Activated CD8-positive, alpha-beta memory T cell treated with anti-CD3 and anti-CD28 coated beads, Interleukin-2, amount 10 ng/mL, durations not matched to agents 7 days and 5 days (primary cell): ENCODE measurements at regions of chr16 and their contacts with region 1.

Region 1: DNA sequence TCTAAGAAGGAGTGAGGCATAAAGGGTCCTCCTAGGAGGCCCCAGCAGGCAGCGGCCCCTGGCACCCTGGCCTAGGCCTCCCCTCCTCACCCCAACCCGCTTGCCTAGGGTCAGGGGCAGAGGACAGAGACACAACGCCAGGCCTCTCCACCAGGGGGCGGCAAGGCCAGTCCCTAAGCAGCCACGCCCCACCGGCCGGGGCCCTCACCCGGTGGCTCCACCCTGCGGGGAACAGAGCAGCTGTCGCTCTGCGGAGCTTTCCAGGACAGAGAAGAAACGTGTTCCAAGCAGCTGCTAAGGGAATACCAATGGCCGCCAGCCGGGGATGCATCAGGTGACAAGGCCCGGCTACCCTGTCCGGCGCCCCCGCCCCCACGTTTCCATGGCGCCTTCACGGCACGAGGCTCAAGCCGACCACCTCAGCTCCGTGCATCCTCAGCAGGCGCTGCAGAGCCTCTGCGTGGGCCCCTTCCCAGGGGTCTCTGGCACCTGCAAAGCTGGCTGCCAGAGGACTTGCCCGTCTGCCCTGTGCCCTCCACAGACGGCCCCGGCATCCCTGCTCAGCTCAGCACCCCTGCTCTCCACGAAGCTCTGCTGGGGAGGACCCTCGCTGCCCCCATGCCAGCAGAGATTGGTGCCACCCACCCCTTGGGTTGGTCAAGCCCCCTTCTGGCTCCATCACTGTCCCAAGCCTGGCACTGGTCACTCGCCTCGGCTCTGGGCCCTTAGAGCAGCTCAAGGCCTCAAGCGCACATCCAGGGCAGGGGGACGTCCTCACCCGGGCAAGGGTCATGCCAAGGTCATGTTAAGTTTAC is 5.6 kb downstream of the ZNF598 start:
- DNase-seq: peak; percentile 92
- ATAC-seq: peak; percentile 92
- H3K4me3 Mint-ChIP-seq: no peak overlapping the region
- H3K27ac Mint-ChIP-seq: no peak overlapping the region
- H3K4me1 Mint-ChIP-seq: peaks cover 39% of the 10 kb centered on the region
- H3K27me3 Mint-ChIP-seq: no peaks in the 10 kb centered on the region

Region 2: DNA sequence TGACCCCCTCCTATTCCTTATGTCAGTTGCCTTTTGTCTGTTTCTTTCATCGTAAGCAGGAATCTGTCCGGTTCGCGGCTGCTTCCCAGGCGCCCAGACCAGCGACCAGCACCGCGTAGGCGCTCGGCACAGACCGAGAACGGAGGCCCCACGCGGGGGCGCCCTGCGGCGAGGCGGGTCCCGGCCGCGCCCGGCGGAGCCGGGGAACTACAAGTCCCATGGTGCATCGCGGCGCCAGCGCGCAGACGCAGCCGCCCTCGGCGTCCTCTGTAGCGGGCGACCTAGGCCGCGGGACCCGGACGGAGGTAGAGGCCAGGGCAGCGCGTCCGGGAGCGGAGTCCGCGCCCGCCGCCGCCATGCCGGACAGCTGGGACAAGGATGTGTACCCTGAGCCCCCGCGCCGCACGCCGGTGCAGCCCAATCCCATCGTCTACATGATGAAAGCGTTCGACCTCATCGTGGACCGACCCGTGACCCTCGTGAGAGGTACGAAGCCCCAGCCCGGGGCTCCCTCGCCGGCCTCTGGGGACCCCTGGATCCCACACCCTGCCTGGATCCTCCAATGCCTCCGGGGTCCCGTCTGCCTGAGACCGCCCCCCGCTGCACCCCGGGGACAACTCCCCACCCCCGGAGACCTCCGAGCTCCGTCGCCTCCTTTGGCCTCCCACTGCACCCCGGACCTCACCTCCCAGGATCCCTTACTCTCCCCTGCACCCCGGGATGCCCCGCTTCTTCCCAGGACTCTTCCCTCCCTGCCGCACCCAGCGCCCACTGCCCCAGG is 44.6 kb before region 1 on chr16 and contains the start of gene NDUFB10:
- CTCF ChIA-PET with region 1: interaction called, 10 read pairs
- DNase-seq: peak; percentile 92
- ATAC-seq: peak; percentile 81
- H3K4me3 Mint-ChIP-seq: peak within 1 kb of the TSS; percentile 88
- H3K27ac Mint-ChIP-seq: peak within 1 kb of the TSS; percentile 94
- H3K4me1 Mint-ChIP-seq: peaks cover 45% of the 10 kb centered on the region
- H3K27me3 Mint-ChIP-seq: peaks cover 2% of the 10 kb centered on the region
- total RNA-seq, gene NDUFB10: 148 to 158 TPM

Region 3: GRCh38 chr16:1983544-1984346 is 20.3 kb before region 1 on chr16 and contains the start of gene GFER:
- CTCF ChIA-PET with region 1: interaction called, 22 read pairs
- DNase-seq: peak; percentile 84
- ATAC-seq: peak; percentile 90
- H3K4me3 Mint-ChIP-seq: peak within 1 kb of the TSS; percentile 83
- H3K27ac Mint-ChIP-seq: peak within 1 kb of the TSS; percentile 36
- H3K4me1 Mint-ChIP-seq: peaks cover 13% of the 10 kb centered on the region
- H3K27me3 Mint-ChIP-seq: peaks cover 42% of the 10 kb centered on the region
- total RNA-seq, gene GFER: 33.5 to 40.9 TPM

Region 4: DNA sequence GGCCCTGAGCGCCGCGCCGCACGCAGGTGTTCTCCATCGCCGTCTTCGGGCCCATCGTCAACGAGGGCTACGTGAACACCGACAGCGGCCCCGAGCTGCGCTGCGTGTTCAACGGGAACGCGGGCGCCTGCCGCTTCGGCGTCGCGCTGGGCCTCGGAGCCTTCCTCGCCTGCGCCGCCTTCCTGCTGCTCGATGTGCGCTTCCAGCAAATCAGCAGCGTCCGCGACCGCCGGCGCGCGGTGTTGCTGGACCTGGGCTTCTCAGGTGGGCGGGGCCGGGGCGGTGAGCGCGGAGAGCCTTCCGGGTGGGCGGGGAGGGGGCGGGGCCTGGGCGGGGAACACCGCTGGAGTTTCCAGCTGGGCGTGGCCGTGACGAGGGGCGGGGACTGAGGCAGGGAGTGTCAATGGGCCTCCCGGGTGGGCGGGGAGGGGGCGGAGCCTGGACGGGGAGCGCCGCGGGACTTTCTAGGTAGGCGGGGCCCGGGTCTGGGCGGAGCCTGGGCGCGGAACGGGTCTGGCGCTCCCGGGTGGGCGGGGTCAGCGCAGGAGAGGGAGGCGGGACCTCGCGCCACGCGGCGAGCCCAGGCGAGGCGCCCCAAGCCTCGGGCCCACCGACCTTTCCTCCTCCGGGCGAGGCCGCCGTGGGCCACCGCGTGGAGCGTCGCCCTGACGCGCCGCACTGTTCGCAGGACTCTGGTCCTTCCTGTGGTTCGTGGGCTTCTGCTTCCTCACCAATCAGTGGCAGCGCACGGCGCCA is 11.9 kb before region 1 on chr16:
- CTCF ChIA-PET with region 1: interaction called, 42 read pairs
- DNase-seq: peak; percentile 99
- ATAC-seq: peak; percentile 76
- H3K4me3 Mint-ChIP-seq: peak overlapping the region; percentile 66
- H3K27ac Mint-ChIP-seq: peak overlapping the region; percentile 49
- H3K4me1 Mint-ChIP-seq: peaks cover 27% of the 10 kb centered on the region
- H3K27me3 Mint-ChIP-seq: peaks cover 11% of the 10 kb centered on the region

Region 5: DNA sequence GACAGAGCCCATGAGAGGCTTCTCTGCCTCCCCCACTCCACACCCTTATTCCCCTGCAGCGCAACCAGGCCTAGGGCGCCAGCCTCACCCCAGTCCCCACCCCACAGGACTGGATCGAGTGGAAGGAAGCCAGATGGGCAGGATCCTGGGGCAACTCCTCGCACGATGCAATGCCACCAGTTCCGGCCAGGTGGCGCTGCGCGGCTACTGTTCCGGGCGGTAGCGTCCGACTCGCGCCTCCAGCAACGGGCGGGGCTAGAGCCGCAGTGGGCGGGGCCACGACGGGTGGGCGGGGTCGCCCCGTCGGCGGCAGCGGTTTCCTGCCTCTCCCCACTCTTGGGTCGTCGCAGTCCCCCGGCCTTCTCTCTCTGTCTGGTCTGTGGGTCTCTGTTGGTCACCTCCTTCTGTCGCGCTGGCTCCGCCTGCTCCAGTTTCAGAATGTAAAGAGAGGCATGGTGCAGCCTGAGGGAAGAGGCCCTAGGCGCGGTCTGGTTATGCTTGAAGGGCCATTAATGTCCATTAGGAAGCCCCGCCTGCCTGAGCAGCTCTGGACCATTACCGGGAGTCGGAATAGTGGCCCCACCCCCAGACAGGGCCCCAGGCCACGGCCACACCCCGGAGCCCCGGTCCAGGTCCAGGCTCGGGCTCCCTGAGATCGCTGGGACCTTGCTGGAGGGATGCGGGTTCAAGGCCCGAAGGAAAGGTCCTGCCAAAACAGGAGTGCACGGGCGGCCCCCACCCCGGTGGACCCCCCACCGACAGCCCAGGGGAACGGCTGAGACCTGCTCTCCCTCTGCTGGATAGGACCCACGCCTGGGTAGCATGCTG is 19.3 kb after region 1 on chr16:
- CTCF ChIA-PET with region 1: interaction called, 11 read pairs
- DNase-seq: peak; percentile 95
- ATAC-seq: peak; percentile 82
- H3K4me3 Mint-ChIP-seq: peak overlapping the region; percentile 56
- H3K27ac Mint-ChIP-seq: peak overlapping the region; percentile 64
- H3K4me1 Mint-ChIP-seq: peaks cover 17% of the 10 kb centered on the region
- H3K27me3 Mint-ChIP-seq: peaks cover 44% of the 10 kb centered on the region

Region 6: DNA sequence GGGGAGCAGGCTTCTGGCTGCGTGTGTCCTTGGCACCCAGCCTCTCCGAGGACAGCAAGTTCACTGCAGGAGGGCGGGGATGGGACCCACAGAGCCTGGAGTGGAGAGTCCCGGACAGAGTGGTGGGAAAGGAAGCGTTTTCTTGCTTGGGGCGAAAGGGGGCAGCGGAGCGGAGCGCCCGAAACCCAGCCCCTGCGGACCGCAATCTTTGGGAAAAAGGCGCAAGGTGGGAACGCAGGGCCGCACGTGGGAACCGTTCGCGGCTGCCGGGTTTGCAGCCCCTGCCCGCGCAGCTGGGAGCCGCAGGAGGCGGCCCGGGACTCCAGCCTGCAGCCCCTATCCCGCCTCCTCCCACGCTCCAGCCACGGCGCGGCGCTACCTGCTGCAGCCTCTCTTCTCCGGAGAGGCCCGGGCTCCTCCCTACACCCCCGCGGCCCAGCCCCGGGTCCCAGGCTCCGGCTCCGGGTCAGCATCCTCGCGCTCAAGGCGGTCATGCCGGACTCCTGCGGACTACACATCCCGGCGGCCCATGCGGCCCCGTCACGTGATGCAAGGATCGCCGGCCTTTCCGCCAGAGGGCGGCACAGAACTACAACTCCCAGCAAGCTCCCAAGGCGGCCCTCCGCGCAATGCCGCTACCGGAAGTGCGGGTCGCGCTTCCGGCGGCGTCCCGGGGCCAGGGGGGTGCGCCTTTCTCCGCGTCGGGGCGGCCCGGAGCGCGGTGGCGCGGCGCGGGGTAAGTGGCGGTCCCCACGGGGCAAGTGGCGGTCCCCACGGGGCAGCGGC is 43.5 kb after region 1 on chr16 and contains the starts of genes NTHL1 and TSC2:
- CTCF ChIA-PET with region 1: interaction called, 15 read pairs
- DNase-seq: peak; percentile 97
- ATAC-seq: peak; percentile 93
- H3K4me3 Mint-ChIP-seq: peak within 1 kb of the TSS; percentile 89
- H3K27ac Mint-ChIP-seq: peak within 1 kb of the TSS; percentile 85
- H3K4me1 Mint-ChIP-seq: peaks cover 21% of the 10 kb centered on the region
- H3K27me3 Mint-ChIP-seq: no peaks in the 10 kb centered on the region
- total RNA-seq, gene NTHL1: 34.3 to 37.5 TPM
- total RNA-seq, gene TSC2: 101 to 115 TPM

Region 7: GRCh38 chr16:2155091-2156021 is 151.3 kb after region 1 on chr16 and contains the start of gene TRAF7:
- CTCF ChIA-PET with region 1: interaction called, 35 read pairs
- DNase-seq: peak; percentile 99
- ATAC-seq: peak; percentile 91
- H3K4me3 Mint-ChIP-seq: peak within 1 kb of the TSS; percentile 96
- H3K27ac Mint-ChIP-seq: peak within 1 kb of the TSS; percentile 93
- H3K4me1 Mint-ChIP-seq: peaks cover 40% of the 10 kb centered on the region
- H3K27me3 Mint-ChIP-seq: no peaks in the 10 kb centered on the region
- total RNA-seq, gene TRAF7: 59.5 to 72.9 TPM